Activated CD4-positive, alpha-beta memory T cell treated with anti-CD3 and anti-CD28 coated beads for 36 hours (primary cell): ENCODE measurements at regions of chr13 and their contacts with region 1.

Region 1: DNA sequence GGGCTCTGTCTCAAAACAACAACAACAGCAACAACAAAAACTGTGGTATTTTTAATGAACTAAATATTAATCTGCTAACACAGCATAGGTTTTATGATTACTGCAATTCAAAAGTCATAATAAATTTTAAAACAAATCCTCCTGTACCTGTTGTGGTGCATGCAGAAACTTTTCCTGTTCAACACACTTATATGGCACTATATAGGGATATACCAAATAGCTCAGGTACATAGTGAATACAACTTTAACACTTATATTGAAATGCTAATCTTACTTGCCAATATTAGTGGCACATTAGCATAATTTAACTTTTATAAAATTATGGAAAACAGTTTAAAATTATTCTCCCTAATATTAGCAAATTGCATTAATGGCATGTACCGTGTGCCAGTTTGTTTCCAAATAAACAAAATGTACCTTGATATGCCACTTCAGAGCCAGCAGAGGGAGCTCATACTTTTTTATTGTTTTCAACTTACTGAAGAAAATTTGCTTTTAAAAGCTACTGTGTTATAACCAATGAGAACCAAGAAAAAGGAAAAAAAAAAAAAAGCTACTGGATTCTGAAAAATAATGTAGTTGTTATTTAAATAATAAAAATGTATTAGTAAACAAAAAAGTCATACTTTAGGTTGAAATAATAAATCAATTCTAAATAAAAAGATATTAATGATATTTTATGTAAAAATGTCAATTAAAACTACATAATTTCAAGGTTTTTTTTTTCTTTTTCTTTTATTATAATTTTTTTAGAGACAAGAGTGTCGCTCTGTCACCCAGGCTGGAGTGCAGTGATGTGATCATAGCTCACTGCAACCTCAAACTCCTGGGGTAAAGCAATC is 18.0 kb upstream of the RBM26 start:
- DNase-seq: no peak
- H3K4me3 Mint-ChIP-seq: no peak overlapping the region
- H3K27ac Mint-ChIP-seq: no peak overlapping the region
- H3K4me1 Mint-ChIP-seq: peaks cover 22% of the 10 kb centered on the region
- H3K27me3 Mint-ChIP-seq: no peaks in the 10 kb centered on the region

Region 2: GRCh38 chr13:78160793-78161192 is 1263.2 kb before region 1 on chr13:
- CTCF ChIA-PET with region 1: no interaction called
- POLR2A ChIA-PET with region 1: no interaction called
- intact Hi-C with region 1: no loop called
- DNase-seq: no peak
- H3K4me3 Mint-ChIP-seq: no peak overlapping the region
- H3K27ac Mint-ChIP-seq: no peak overlapping the region
- H3K4me1 Mint-ChIP-seq: no peaks in the 10 kb centered on the region
- H3K27me3 Mint-ChIP-seq: peaks cover 3% of the 10 kb centered on the region

Region 3: DNA sequence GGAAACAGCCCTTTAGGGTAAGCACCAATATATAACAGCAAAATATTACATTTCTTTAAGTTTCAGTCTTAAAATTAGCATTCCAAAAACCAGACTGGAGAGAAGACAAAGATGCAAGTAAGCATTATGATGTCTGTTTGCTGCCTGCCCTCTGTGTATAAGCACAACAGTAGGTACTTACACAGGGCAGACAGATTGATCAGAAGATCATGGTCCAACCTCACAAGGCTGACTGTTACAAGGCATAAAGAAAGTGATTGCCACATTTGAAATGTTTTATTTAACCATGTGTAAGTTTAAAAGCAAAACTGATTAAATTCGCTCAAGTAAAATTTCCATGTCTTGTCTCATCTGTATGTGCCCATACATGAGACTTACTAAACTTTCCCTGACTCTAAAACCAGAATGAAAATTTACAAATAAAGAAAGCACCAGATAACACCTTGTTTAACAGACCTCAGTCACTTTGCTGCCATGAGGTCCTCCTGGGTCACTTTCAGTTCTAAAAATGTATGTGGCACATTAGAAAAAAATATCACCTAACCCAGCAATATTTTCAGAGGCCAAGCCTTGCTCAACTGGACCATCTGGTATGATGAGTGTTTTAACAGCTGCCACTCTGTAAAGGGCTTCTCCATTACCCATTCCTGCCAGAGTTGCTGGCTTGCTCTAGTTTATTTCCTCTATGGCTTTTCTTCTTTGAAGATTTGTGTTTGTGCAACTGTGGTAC is 314.9 kb before region 1 on chr13:
- CTCF ChIA-PET with region 1: no interaction called
- POLR2A ChIA-PET with region 1: no interaction called
- intact Hi-C with region 1: no loop called
- DNase-seq: no peak
- H3K4me3 Mint-ChIP-seq: no peak overlapping the region
- H3K27ac Mint-ChIP-seq: no peak overlapping the region
- H3K4me1 Mint-ChIP-seq: no peaks in the 10 kb centered on the region
- H3K27me3 Mint-ChIP-seq: no peaks in the 10 kb centered on the region

Region 4: GRCh38 chr13:79227418-79227817 is 196.6 kb before region 1 on chr13:
- CTCF ChIA-PET with region 1: no interaction called
- POLR2A ChIA-PET with region 1: no interaction called
- intact Hi-C with region 1: no loop called
- DNase-seq: no peak
- H3K4me3 Mint-ChIP-seq: no peak overlapping the region
- H3K27ac Mint-ChIP-seq: no peak overlapping the region
- H3K4me1 Mint-ChIP-seq: no peaks in the 10 kb centered on the region
- H3K27me3 Mint-ChIP-seq: peaks cover 7% of the 10 kb centered on the region

Region 5: DNA sequence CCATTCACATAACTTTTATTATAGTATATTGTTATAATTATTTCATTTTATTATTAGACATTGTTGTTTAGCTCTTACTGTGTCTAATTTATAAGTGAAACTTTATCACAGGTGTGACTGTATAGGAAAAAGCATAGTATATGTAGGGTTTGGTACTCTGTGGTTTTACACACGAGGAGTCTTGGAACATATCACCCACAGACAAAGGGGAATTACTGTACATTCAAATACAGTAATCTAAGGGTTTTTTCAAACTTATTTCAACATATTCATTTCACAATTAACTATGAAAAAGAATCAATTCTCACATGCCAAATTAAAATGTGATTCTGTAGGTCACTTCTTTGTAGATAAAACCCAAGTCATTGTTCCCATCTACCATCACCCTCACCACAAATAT is 63.9 kb before region 1 on chr13:
- CTCF ChIA-PET with region 1: no interaction called
- POLR2A ChIA-PET with region 1: no interaction called
- intact Hi-C with region 1: no loop called
- DNase-seq: no peak
- H3K4me3 Mint-ChIP-seq: no peak overlapping the region
- H3K27ac Mint-ChIP-seq: no peak overlapping the region
- H3K4me1 Mint-ChIP-seq: peaks cover 20% of the 10 kb centered on the region
- H3K27me3 Mint-ChIP-seq: no peaks in the 10 kb centered on the region

Region 6: DNA sequence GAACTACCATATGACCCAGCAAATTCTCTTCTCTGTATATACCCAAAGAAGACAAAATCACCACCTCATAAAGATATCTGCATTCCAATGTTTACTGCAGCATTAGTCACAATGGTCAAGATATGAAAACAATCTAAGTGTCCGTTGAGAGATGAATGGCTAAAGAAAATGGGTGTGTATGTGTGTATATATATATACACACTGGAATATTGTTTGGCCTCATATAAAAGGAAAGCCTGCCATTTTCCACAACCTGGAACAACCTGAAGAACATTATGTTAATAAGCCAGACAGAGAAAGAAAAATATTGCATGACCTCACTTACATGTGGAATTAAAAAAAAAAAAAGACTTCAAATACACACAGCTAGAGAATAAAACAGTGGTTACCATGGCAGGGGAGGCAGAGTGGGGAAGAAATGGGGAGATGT is 11.6 kb after region 1 on chr13:
- CTCF ChIA-PET with region 1: interaction called, 16 read pairs
- POLR2A ChIA-PET with region 1: no interaction called
- intact Hi-C with region 1: no loop called
- DNase-seq: no peak
- H3K4me3 Mint-ChIP-seq: no peak overlapping the region
- H3K27ac Mint-ChIP-seq: no peak overlapping the region
- H3K4me1 Mint-ChIP-seq: peaks cover 16% of the 10 kb centered on the region
- H3K27me3 Mint-ChIP-seq: no peaks in the 10 kb centered on the region

Region 7: DNA sequence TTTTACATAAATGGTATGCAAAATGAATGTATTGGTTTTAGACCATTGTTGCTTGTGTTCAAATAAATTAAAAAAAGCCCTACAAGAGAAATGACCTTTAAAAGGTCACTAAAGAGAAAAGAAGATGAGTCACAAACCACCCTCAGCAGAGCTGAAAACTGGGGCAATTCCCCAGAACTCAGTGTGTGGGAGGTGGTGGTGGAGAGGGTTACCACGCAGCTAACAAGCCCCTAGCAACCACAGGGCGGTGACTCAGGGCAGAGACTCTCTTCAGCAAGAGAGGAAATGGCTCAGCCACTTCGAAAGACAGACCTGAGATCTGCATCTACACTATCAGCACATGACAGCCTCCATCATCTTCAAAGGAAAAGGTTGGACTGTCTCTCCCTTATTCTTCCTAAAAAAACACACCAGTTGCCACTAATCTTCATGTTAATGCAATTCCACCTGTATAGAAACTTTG is 27.5 kb after region 1 on chr13:
- CTCF ChIA-PET with region 1: interaction called, 12 read pairs
- POLR2A ChIA-PET with region 1: no interaction called
- intact Hi-C with region 1: loop called (anchors 1 kb)
- DNase-seq: peak; percentile 98
- H3K4me3 Mint-ChIP-seq: peak overlapping the region; percentile 74
- H3K27ac Mint-ChIP-seq: peak overlapping the region; percentile 97
- H3K4me1 Mint-ChIP-seq: peaks cover 84% of the 10 kb centered on the region
- H3K27me3 Mint-ChIP-seq: no peaks in the 10 kb centered on the region

Region 8: DNA sequence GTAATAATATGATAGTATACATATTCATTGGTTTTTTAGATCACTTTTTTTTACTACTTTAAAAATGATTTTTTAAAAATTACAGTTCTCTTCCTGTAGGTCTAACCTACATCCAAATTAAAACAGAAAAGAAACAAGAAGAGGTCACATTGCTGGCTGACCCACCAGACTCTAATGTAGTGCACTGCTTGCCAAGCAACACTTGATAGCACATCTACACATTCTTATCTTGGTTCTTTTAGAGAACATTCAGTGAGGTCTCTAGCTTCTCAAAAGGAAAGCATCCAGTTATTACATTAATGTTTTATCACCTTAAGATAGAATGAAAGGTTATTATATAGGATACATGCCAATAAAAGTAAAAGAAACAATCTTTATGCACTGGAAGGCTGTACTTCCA is 92.6 kb after region 1 on chr13:
- CTCF ChIA-PET with region 1: interaction called, 19 read pairs
- POLR2A ChIA-PET with region 1: no interaction called
- intact Hi-C with region 1: no loop called
- DNase-seq: no peak
- H3K4me3 Mint-ChIP-seq: no peak overlapping the region
- H3K27ac Mint-ChIP-seq: no peak overlapping the region
- H3K4me1 Mint-ChIP-seq: peaks cover 44% of the 10 kb centered on the region
- H3K27me3 Mint-ChIP-seq: no peaks in the 10 kb centered on the region

Region 9: DNA sequence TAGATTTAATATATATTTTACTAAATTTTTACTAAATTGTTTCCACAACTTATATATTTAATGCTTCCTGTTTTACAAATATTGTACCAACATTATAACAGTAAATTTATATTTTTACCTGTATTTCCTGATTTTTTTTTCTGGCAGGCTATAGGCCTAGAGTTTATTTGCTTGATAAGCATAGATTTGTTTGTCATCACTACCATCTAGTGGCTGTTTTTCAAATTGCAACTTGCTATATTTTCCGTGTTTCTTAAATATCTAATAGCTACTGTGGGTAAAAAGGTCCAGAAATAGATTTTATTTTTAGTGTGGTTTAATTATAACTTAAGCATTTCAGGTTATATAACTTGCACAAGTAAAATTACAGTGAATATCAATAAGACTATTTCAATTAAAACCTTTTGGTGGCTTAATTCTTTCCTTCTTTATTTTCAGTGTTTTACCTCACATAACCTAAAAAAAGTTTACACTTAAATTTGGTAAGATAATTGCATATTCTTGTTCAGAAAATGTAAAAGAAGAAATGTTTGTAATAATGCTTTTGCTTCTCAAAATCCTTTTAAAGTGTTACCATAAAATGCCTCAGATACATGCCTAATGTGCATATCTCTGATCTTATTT is 117.5 kb after region 1 on chr13:
- CTCF ChIA-PET with region 1: interaction called, 244 read pairs
- POLR2A ChIA-PET with region 1: interaction called, 3 read pairs
- intact Hi-C with region 1: loop called (anchors 1 kb)
- DNase-seq: no peak
- H3K4me3 Mint-ChIP-seq: no peak overlapping the region
- H3K27ac Mint-ChIP-seq: no peak overlapping the region
- H3K4me1 Mint-ChIP-seq: peaks cover 6% of the 10 kb centered on the region
- H3K27me3 Mint-ChIP-seq: no peaks in the 10 kb centered on the region